Mammary epithelial cell (primary cell): ENCODE measurements at regions of chr15 and their contacts with region 1.

Region 1: GRCh38 chr15:101156509-101157159 is 95.2 kb downstream of the CHSY1 start:
- DNase-seq: no peak
- H3K4me3 ChIP-seq: no peak overlapping the region
- H3K27ac ChIP-seq: no peak overlapping the region
- H3K4me1 ChIP-seq: no peaks in the 10 kb centered on the region
- H3K27me3 ChIP-seq: no peaks in the 10 kb centered on the region
- CTCF ChIP-seq: no peak

Region 2: DNA sequence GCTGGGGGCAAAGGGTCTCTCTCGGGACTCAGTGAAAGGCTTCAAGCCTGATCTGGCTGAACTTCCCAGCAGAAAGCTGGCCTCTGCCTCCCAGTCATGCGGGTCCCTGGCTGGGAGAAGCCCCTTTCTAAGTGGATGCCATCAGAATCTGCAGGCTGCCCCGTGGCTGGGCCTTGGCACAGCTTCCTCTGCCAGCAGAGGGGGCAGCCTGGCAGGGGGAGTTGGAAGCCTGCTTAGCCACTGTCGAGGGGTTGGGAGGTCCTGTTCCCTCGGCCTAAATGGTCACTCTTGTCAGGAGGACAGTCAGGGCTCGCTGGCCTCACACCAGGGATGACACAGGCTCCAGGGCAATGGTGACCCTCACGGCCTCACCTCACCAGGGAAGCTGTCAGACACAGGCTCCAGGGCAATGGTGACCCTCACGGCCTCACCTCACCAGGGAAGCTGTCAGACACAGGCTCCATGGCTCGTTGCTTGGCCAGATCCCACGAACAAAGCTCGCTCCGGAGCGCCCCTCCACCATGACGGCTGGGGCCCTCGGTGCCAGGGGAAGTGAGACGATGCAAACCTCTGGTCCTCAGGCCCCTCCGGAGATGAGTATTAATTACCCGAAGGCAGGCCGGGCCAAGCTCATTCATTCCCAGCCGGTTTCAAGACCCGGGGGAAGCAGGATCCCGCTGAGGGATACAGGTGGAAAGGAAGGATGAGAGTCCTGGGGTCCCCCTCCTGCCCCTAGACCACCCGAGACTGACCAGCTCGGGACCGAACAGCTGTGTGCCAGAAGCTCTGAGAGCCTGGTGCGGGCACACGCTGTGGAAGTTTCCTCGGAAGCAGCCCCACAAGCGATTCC is 55.8 kb before region 1 on chr15:
- CTCF ChIA-PET with region 1: no interaction called
- dilution Hi-C with region 1: loop called (anchors 5 kb)
- in situ Hi-C with region 1: no loop called
- intact Hi-C with region 1: no loop called
- DNase-seq: no peak
- H3K4me3 ChIP-seq: no peak overlapping the region
- H3K27ac ChIP-seq: no peak overlapping the region
- H3K4me1 ChIP-seq: no peaks in the 10 kb centered on the region
- H3K27me3 ChIP-seq: peaks cover 1% of the 10 kb centered on the region
- CTCF ChIP-seq: no peak

Region 3: DNA sequence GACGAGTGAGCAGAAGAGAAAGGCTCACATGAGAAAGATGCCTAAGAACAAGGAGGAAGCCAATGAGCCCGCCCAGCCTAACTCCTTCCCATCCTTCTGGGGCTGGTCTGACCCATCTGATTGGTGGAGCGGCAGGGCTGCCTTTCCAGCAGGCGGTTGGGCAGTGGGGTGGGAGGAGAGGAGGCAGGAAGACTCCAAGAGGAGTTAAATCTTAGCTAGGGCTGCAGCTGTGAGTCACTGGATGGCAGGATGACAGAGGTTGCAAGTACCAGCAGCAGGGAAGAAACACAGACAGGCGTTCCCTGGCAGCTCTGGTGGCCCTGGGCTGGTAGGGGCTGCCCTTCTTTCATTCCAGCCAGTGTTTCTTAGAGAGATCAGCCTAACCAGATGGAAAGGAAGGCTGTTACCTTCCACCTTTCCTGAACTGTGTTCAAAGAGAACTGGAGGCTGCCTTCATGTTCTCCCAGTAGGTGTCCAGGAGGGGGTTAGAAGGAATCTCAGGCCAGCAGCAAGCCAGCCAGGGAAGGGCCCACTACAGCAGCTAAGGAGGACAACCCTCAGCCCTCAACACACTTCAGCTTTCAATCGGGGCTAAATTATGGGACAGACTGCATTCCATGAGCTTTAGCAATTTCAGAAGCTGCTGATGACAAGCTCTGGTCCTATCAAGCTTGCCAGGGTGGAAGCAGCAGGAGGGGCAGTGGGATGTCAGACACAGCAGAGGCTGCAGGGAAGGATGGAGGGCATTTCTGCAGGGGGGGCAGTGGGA is 45.0 kb after region 1 on chr15:
- CTCF ChIA-PET with region 1: no interaction called
- dilution Hi-C with region 1: no loop called
- in situ Hi-C with region 1: no loop called
- intact Hi-C with region 1: no loop called
- DNase-seq: peak; percentile 94
- H3K4me3 ChIP-seq: no peak overlapping the region
- H3K27ac ChIP-seq: no peak overlapping the region
- H3K4me1 ChIP-seq: peaks cover 26% of the 10 kb centered on the region
- H3K27me3 ChIP-seq: no peaks in the 10 kb centered on the region
- CTCF ChIP-seq: no peak

Region 4: GRCh38 chr15:101221902-101222301 is 65.3 kb after region 1 on chr15:
- CTCF ChIA-PET with region 1: no interaction called
- dilution Hi-C with region 1: loop called (anchors 5 kb)
- in situ Hi-C with region 1: no loop called
- intact Hi-C with region 1: no loop called
- DNase-seq: no peak
- H3K4me3 ChIP-seq: no peak overlapping the region
- H3K27ac ChIP-seq: no peak overlapping the region
- H3K4me1 ChIP-seq: no peaks in the 10 kb centered on the region
- H3K27me3 ChIP-seq: no peaks in the 10 kb centered on the region
- CTCF ChIP-seq: no peak